Common myeloid progenitor, CD34-positive (primary cell): ENCODE measurements at regions of chr22 and their contacts with region 1.

Region 1: DNA sequence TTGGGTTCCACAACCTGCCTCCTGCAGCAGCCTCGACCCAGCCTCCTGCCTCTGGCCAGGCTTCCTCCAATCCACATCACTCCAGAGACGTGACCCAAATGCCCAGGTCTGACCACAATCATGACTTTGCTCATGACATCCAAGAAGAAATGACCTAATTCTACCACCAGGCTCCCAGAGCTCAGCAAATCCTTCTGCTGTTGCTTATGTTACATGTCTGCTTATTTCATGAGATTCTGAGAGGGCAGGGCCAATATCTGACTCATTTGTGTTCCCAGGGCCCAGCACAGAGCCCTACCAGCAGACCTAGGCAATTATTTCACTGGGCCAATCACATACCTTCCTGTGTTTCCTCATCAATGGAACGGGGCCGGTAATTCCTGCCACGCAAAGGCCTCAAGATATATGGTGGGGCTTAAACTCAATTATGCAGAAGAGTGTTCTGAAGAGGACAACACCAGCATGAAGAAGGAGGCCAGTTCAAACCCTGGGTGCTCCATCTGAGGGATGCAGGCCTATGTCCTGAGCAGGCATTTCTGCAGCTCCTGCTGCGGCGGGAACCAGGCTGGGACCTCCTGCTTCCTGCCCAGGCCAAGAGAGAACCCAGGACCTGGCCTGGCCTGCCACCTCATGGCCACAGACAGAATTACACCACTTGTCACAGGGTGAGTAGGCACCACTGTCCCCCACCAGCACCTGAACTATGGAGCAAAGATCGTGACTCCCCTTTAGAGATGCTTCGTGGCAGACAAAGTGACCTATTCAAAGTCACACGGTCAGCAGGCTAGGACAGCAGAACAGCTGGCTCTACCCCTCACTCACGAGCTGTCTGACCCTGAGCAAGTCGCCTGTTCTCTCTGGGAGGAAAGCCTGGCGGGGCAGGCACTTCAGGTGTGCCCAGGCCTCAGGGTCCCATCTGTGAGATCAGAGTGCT is 5.9 kb downstream of the CENPM start:
- DNase-seq: peak; percentile 79 to 89 (median 87)
- H3K4me3 ChIP-seq: peak overlapping the region in 1 of 7 experiments; percentile 30
- H3K27ac ChIP-seq: peak overlapping the region in 1 of 2 experiments; percentile 54
- H3K4me1 ChIP-seq: peaks cover 0 to 22% (median 14%) of the 10 kb centered on the region in 4 experiments
- H3K27me3 ChIP-seq: no peaks in the 10 kb centered on the region

Region 2: DNA sequence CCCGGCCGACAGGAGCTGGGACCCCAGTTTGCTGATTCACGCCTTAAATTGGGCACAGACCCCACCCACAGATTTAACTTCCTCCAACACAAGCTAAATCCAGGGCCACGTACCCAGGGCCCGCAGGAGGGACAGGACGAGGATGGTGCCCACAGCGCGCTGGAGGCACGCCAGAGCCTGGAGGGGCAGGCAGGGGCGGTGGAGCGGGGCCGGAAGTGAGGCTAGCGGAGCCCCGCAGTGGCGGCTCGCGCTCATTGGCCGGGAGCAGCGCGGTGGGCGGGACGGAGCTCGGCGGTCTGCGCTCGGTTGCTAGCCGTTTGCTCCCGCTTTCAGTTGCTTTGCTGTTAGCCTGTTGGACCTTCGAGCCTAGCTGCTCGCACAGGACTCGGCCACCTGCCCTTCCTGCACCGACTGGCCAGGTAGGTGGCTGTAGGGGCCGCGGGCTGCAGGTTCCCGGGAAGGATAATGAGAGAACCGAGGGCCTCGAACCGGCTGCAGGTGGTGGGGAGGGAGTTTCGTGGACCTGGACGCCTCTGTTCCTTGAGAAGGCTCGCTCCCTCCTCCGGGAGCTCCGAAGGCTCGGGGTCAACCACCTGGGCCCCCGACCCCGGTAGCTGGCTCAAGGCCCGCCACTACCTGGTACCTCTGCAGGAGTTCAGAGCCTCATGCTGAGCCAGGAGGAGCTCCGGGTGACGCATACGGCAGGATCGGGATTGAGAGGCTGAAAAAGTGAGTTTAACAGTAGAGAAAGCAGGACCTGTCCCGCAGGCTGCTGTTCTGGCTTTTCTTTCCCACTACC is 140.6 kb before region 1 on chr22 and contains the start of gene CCDC134:
- CTCF ChIA-PET with region 1: no interaction called
- POLR2A ChIA-PET with region 1: no interaction called
- DNase-seq: peak; percentile 92 to 98 (median 98)
- H3K4me3 ChIP-seq: peak within 1 kb of the TSS; percentile 73 to 98 (median 90)
- H3K27ac ChIP-seq: peak within 1 kb of the TSS; percentile 78 to 90
- H3K4me1 ChIP-seq: peaks cover 3 to 32% (median 26%) of the 10 kb centered on the region in 4 experiments
- H3K27me3 ChIP-seq: no peaks in the 10 kb centered on the region

Region 3: DNA sequence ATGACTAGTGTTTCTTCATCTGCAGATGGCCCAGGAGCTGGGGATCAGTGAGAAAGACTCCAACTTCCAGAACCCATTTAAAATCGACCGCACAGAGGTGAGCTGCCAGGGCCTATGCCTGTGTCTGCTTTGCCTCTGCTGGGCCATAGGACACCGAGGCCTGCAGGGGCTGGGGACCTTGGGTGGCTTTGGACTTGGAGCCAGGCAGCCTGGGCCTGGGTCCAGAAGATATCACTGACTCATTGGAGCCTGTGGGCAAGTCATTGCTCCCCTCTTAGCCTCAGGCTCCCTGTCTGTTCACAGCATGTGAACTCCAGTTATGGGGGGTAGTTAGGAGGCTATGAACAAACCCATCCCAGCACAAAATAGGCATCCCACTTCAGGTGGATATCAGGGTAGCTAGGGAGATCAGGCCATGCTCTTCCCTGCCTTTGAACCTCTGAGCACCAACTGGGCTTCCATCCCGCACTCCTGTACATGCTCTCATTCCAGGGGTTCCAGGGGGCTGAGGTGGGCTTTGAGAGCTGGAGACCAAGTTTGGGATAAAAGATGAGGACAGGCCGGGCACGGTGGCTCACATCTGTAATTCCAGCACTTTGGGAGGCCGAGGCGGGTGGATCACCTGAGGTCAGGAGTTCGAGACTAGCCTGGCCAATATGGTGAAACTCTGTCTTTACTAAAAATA is 127.2 kb before region 1 on chr22:
- CTCF ChIA-PET with region 1: no interaction called
- POLR2A ChIA-PET with region 1: no interaction called
- DNase-seq: no peak
- H3K4me3 ChIP-seq: no peak overlapping the region
- H3K27ac ChIP-seq: no peak overlapping the region
- H3K4me1 ChIP-seq: no peaks in the 10 kb centered on the region
- H3K27me3 ChIP-seq: no peaks in the 10 kb centered on the region

Region 4: GRCh38 chr22:41925655-41926460 is 15.2 kb before region 1 on chr22:
- CTCF ChIA-PET with region 1: interaction called, 48 read pairs
- POLR2A ChIA-PET with region 1: interaction called, 5 read pairs
- DNase-seq: peak; percentile 57 to 80 (median 79)
- H3K4me3 ChIP-seq: peak overlapping the region in 5 of 7 experiments; percentile 6 to 63 (median 56)
- H3K27ac ChIP-seq: no peak overlapping the region
- H3K4me1 ChIP-seq: peaks cover 0 to 18% (median 11%) of the 10 kb centered on the region in 4 experiments
- H3K27me3 ChIP-seq: peaks cover 0 to 41% (median 8%) of the 10 kb centered on the region in 5 experiments

Region 5: DNA sequence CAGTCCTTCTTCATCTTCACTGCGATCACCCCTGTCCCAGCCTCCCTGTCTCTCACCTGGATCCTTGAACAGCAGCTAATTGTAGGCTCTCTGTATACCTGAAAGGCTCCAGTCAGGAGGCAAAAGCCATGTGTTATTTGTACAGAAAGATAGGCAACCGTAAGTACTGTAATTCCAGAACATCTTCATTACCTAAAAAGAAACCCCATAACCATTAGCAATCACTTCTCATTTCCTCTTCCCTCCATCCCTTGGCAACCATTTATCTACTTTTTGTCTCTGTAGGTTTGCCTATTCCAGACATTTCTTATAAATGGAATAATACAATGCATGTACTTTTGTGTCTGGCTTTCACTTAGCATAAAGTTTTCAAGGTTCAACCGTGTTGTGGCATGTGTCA is 111.7 kb after region 1 on chr22:
- CTCF ChIA-PET with region 1: no interaction called
- POLR2A ChIA-PET with region 1: no interaction called
- DNase-seq: no peak
- H3K4me3 ChIP-seq: no peak overlapping the region
- H3K27ac ChIP-seq: no peak overlapping the region
- H3K4me1 ChIP-seq: no peaks in the 10 kb centered on the region
- H3K27me3 ChIP-seq: no peaks in the 10 kb centered on the region